CD4-positive, alpha-beta memory T cell (primary cell): ENCODE measurements at regions of chr3 and their contacts with region 1.

Region 1: DNA sequence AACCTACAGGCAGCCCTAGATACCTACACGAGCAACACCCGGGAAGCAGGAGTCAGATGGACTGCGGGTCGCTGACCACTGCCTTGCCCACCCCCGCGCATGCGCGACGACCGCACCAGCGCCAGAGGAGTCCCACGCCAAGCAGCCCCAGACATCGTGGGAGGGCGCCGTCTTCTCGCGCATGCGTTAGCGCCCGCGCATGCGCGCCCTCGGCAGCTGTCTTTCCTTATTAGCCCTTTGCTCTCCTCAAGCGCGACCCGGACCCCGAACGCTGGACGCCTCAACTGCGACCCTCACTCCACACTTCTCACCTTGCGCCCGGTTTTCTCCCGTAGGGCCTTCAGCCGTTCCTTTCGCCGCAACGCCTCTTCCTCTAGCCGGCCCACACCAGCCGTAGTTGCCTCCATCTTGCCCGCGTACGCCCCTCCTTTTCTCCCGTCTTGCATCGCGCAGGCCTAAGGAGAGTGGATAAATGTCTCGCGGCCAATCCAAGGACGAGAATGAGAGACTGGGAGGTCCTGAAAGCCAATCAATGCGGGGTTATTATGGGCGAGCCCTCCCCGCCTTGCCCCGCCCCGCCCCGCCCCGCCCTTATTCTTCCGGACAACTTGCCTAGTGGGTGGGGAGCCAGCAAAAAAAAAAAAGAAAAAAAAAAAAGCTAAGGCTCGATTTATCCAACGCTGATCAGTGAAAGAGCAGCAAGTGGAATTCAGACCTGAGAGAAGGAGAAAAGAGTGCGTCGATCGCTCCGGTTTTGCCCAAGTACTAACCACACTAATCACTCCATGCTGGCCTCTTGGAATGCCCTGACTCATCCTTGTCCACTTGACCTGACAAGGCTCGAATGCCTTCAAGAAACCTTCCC is at the start of gene CCDC12:
- DNase-seq: peak; percentile 97 to 98 (median 98)
- H3K4me3 ChIP-seq: peak within 1 kb of the TSS; percentile 67 to 99
- H3K4me3 Mint-ChIP-seq: peak within 1 kb of the TSS; percentile 94 to 100 (median 100)
- H3K27ac ChIP-seq: peak within 1 kb of the TSS; percentile 89
- H3K27ac Mint-ChIP-seq: peak within 1 kb of the TSS; percentile 90 to 100 (median 99)
- H3K4me1 ChIP-seq: peaks cover 75% of the 10 kb centered on the region
- H3K4me1 Mint-ChIP-seq: peaks cover 45 to 78% (median 62%) of the 10 kb centered on the region in 4 donors
- H3K27me3 ChIP-seq: no peaks in the 10 kb centered on the region
- H3K27me3 Mint-ChIP-seq: no peaks in the 10 kb centered on the region
- total RNA-seq, gene CCDC12: 59.3 to 59.4 TPM

Region 2: GRCh38 chr3:46909535-46910442 is 66.8 kb before region 1 on chr3:
- CTCF ChIA-PET with region 1: interaction called, 6 read pairs
- POLR2A ChIA-PET with region 1: interaction called, 13 read pairs
- intact Hi-C with region 1: no loop called
- DNase-seq: peak; percentile 64 to 82 (median 70)
- H3K4me3 ChIP-seq: no peak overlapping the region
- H3K4me3 Mint-ChIP-seq: peak overlapping the region in 1 of 8 donors; percentile 23
- H3K27ac ChIP-seq: no peak overlapping the region
- H3K27ac Mint-ChIP-seq: peak overlapping the region in 2 of 7 donors; percentile 4 to 30
- H3K4me1 ChIP-seq: peaks cover 27% of the 10 kb centered on the region
- H3K4me1 Mint-ChIP-seq: peaks cover 13 to 18% (median 17%) of the 10 kb centered on the region in 4 donors
- H3K27me3 ChIP-seq: no peaks in the 10 kb centered on the region
- H3K27me3 Mint-ChIP-seq: no peaks in the 10 kb centered on the region

Region 3: GRCh38 chr3:46953234-46954010 is 23.1 kb before region 1 on chr3:
- CTCF ChIA-PET with region 1: interaction called, 9 read pairs
- POLR2A ChIA-PET with region 1: interaction called, 116 read pairs
- intact Hi-C with region 1: loop called (anchors 1 kb)
- DNase-seq: peak in 2 of 5 donors; percentile 30 to 46
- H3K4me3 ChIP-seq: no peak overlapping the region
- H3K4me3 Mint-ChIP-seq: peak overlapping the region in 7 of 8 donors; percentile 69 to 84 (median 79)
- H3K27ac ChIP-seq: peak overlapping the region; percentile 35
- H3K27ac Mint-ChIP-seq: peak overlapping the region; percentile 74 to 85 (median 81)
- H3K4me1 ChIP-seq: peaks cover 91% of the 10 kb centered on the region
- H3K4me1 Mint-ChIP-seq: peaks cover 70 to 92% (median 81%) of the 10 kb centered on the region in 4 donors
- H3K27me3 ChIP-seq: no peaks in the 10 kb centered on the region
- H3K27me3 Mint-ChIP-seq: no peaks in the 10 kb centered on the region

Region 4: GRCh38 chr3:46987743-46988401 is 11.3 kb after region 1 on chr3:
- CTCF ChIA-PET with region 1: interaction called, 9 read pairs
- POLR2A ChIA-PET with region 1: interaction called, 222 read pairs
- intact Hi-C with region 1: loop called (anchors 1 kb)
- DNase-seq: peak; percentile 91 to 94 (median 94)
- H3K4me3 ChIP-seq: peak overlapping the region; percentile 57 to 66
- H3K4me3 Mint-ChIP-seq: peak overlapping the region; percentile 83 to 91 (median 86)
- H3K27ac ChIP-seq: peak overlapping the region; percentile 76
- H3K27ac Mint-ChIP-seq: peak overlapping the region; percentile 86 to 98 (median 96)
- H3K4me1 ChIP-seq: peaks cover 86% of the 10 kb centered on the region
- H3K4me1 Mint-ChIP-seq: peaks cover 53 to 90% (median 76%) of the 10 kb centered on the region in 4 donors
- H3K27me3 ChIP-seq: no peaks in the 10 kb centered on the region
- H3K27me3 Mint-ChIP-seq: no peaks in the 10 kb centered on the region

Region 5: DNA sequence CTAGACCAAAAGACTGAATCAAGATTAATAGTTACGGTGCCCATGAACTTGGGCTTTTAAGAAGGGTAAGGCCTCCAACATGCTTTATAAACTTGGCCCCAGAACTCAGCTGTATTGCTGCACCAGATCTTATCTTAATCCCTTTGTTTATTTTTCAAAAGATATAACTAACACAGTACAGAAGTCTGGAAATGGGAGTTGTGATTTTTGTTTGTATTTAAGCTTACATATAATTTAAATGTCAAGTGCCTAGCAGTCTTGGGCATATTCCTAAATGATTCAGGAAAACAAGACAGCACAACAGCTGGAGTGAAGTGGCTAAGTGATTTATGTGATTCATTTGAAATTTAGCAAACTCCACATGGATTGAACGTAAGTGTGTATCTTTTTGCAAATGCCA is 59.1 kb after region 1 on chr3:
- CTCF ChIA-PET with region 1: no interaction called
- POLR2A ChIA-PET with region 1: no interaction called
- intact Hi-C with region 1: loop called (anchors 5 kb)
- DNase-seq: no peak
- H3K4me3 ChIP-seq: no peak overlapping the region
- H3K4me3 Mint-ChIP-seq: no peak overlapping the region
- H3K27ac ChIP-seq: no peak overlapping the region
- H3K27ac Mint-ChIP-seq: peak overlapping the region in 4 of 7 donors; percentile 49 to 79 (median 59)
- H3K4me1 ChIP-seq: peaks cover 21% of the 10 kb centered on the region
- H3K4me1 Mint-ChIP-seq: peaks cover 30 to 42% (median 35%) of the 10 kb centered on the region in 4 donors
- H3K27me3 ChIP-seq: no peaks in the 10 kb centered on the region
- H3K27me3 Mint-ChIP-seq: no peaks in the 10 kb centered on the region

Region 6: GRCh38 chr3:47164007-47164881 is 187.7 kb after region 1 on chr3 and contains the start of gene SETD2:
- CTCF ChIA-PET with region 1: interaction called, 3 read pairs
- POLR2A ChIA-PET with region 1: interaction called, 9 read pairs
- intact Hi-C with region 1: loop called (anchors 2 kb)
- DNase-seq: peak; percentile 83 to 90 (median 85)
- H3K4me3 ChIP-seq: peak within 1 kb of the TSS; percentile 94 to 95
- H3K4me3 Mint-ChIP-seq: peak within 1 kb of the TSS; percentile 97 to 100 (median 98)
- H3K27ac ChIP-seq: peak within 1 kb of the TSS; percentile 85
- H3K27ac Mint-ChIP-seq: peak within 1 kb of the TSS; percentile 85 to 100 (median 99)
- H3K4me1 ChIP-seq: peaks cover 50% of the 10 kb centered on the region
- H3K4me1 Mint-ChIP-seq: peaks cover 34 to 58% (median 46%) of the 10 kb centered on the region in 4 donors
- H3K27me3 ChIP-seq: no peaks in the 10 kb centered on the region
- H3K27me3 Mint-ChIP-seq: peaks cover 0 to 1% of the 10 kb centered on the region in 2 donors
- total RNA-seq, gene SETD2: 74.0 to 74.1 TPM

Region 7: GRCh38 chr3:47228088-47228487 is 251.5 kb after region 1 on chr3:
- CTCF ChIA-PET with region 1: no interaction called
- POLR2A ChIA-PET with region 1: no interaction called
- intact Hi-C with region 1: no loop called
- DNase-seq: no peak
- H3K4me3 ChIP-seq: no peak overlapping the region
- H3K4me3 Mint-ChIP-seq: no peak overlapping the region
- H3K27ac ChIP-seq: no peak overlapping the region
- H3K27ac Mint-ChIP-seq: peak overlapping the region in 1 of 7 donors; percentile 40
- H3K4me1 ChIP-seq: no peaks in the 10 kb centered on the region
- H3K4me1 Mint-ChIP-seq: no peaks in the 10 kb centered on the region
- H3K27me3 ChIP-seq: no peaks in the 10 kb centered on the region
- H3K27me3 Mint-ChIP-seq: no peaks in the 10 kb centered on the region

Region 8: GRCh38 chr3:47380601-47381316 is 404.2 kb after region 1 on chr3 and contains the start of gene PTPN23:
- CTCF ChIA-PET with region 1: no interaction called
- POLR2A ChIA-PET with region 1: interaction called, 5 read pairs
- intact Hi-C with region 1: loop called (anchors 1 kb)
- DNase-seq: peak; percentile 98 to 99 (median 98)
- H3K4me3 ChIP-seq: peak within 1 kb of the TSS; percentile 88 to 97
- H3K4me3 Mint-ChIP-seq: peak within 1 kb of the TSS; percentile 99
- H3K27ac ChIP-seq: peak within 1 kb of the TSS; percentile 90
- H3K27ac Mint-ChIP-seq: peak within 1 kb of the TSS; percentile 95 to 100 (median 100)
- H3K4me1 ChIP-seq: peaks cover 43% of the 10 kb centered on the region
- H3K4me1 Mint-ChIP-seq: peaks cover 26 to 59% (median 40%) of the 10 kb centered on the region in 4 donors
- H3K27me3 ChIP-seq: no peaks in the 10 kb centered on the region
- H3K27me3 Mint-ChIP-seq: no peaks in the 10 kb centered on the region
- total RNA-seq, gene PTPN23: 50.0 to 53.9 TPM